ENCODE measurements at regions of chr22 and their contacts with region 1.

Region 1: DNA sequence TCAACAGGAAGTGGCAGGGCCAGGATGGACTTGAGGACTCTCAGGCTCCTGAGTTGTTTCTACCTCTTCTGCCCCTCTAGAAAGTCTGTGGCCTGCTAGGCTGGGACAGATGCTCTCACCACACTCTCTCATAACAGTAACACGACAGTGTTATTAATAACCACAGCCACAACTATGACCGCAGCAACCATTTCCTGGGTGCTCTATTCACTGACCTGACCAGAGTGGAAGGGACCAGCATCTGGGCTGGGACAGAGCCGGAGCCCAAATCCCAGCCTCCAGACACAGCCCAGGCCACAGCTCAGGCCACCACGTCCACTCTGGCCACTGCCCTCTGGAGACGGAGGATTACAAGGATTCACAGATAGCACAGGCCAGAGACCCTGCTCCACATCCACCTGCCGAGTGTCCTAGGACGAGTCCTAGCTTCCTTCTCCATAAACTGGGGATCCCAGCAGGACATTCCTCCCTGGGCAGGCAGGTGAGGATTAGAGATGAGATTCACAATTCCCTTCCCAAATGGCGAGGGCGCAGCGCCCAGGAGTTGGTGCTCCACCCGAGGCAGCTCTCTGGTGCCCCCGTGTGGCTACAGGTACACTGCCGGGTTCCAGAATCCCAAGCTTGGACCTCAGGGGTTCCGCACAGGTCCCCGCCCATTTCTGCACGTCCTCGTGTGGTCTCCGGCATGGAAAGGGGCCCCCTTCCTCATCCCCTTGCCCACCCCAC is 7.0 kb downstream of the PNPLA5 start:
- DNase-seq: peak; percentile 83

Region 2: GRCh38 chr22:43861529-43861928 is 23.2 kb before region 1 on chr22:
- CTCF ChIA-PET with region 1: interaction called, 10 read pairs
- POLR2A ChIA-PET with region 1: interaction called, 6 read pairs
- DNase-seq: no peak

Region 3: DNA sequence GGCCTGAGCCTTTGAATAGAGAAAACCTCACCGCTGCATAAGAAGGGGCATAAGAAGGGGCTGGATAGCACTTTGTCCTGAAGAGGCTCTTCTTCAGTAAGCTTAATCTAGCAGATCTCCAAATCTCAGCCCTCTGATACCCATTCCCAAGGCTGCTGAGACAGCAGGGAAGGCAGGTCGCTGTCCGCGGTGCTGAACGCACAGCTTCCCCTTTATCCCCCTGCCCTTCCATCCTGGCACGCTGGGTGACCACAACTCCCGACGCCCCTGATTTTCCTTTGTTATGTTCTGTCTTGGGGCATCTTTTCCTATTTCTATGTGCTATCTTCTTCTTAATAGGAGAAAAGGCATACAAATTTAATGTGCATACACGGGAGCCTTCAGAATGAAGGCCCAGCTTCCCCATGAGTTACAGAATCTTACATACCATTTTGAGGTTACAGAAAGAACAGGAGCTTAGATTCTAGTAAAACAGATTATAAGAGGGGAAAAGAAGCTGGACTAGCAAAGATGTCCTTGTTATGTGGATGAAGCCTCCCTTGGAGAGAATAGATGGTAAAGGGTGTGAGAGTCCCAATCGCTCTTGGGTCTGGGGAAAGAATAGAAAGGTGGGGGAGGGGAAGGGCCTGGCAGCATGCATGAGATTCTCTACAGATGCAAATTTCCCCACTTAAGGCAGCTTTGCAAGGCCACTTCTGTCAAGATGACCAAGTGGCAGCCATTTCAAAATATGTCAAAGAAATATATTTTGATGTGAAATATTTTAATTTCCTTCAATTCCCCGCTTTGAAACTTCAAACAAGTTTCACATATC is 16.7 kb before region 1 on chr22:
- CTCF ChIA-PET with region 1: interaction called, 13 read pairs
- POLR2A ChIA-PET with region 1: no interaction called
- DNase-seq: peak; percentile 75

Region 4: DNA sequence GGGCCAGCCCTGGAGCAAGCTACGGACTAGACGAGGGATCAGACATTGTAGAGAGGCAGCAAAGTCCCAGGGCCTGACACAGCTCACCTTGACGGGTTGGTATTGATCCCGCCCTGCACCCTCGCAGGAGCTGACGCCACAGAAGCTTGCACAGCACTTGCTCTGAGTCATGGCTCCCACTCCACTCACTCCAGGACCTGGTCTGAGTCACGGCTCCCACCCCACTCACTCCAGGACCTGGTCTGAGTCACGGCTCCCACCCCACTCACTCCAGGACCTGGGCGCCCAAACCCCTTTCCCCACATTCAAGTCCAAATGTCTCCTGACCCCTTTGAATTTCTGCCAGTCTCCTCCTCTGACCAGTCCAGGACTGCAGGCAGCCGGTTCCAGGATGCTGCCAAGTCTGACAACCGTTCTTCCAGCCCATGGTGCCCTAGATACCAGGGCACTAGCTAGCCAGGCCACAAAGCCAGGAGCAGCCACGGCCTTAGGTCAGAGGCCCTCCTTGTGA is 13.0 kb after region 1 on chr22:
- CTCF ChIA-PET with region 1: interaction called, 21 read pairs
- POLR2A ChIA-PET with region 1: interaction called, 3 read pairs
- DNase-seq: no peak

Region 5: GRCh38 chr22:43945632-43946383 is 61.0 kb after region 1 on chr22:
- CTCF ChIA-PET with region 1: interaction called, 22 read pairs
- POLR2A ChIA-PET with region 1: no interaction called
- DNase-seq: peak; percentile 83

Measured in HEK293T (cell line).